ENCODE measurements at regions of chr18 and their contacts with region 1.

Region 1: GRCh38 chr18:7383002-7383980 is 152.4 kb downstream of the LRRC30 start:
- DNase-seq: no peak
- ATAC-seq: peak in 7 of 8 donors; percentile 29 to 77 (median 55)
- H3K4me3 ChIP-seq: no peak overlapping the region
- H3K27ac ChIP-seq: peak overlapping the region in 8 of 10 donors; percentile 35 to 76 (median 63)
- H3K4me1 ChIP-seq: peaks cover 0 to 28% (median 11%) of the 10 kb centered on the region in 9 donors
- H3K27me3 ChIP-seq: no peaks in the 10 kb centered on the region
- CTCF ChIP-seq: no peak

Region 2: DNA sequence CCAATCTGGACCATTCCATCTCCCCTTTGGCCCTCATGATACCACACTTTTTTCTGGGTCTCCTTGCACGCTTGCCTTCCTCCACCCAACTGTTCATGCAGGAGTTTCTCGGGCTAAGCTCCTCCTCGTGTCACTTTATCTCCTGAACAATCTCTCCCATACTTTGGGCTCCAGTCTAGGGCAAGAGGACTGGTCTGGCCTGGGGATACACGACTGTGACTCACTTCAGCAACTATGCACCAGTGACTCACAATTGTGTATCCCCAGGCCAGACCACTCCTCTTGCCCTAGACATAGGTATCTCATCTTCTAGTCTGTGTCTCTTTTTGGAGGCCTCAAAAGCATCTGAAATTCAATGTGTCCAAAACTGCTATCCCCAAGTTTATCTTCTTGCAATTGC is 34.5 kb after region 1 on chr18:
- intact Hi-C with region 1: loop called in 1 of 10 experiments (anchors 5 kb)
- DNase-seq: no peak
- ATAC-seq: no peak
- H3K4me3 ChIP-seq: no peak overlapping the region
- H3K27ac ChIP-seq: no peak overlapping the region
- H3K4me1 ChIP-seq: peaks cover 0 to 22% (median 9%) of the 10 kb centered on the region in 9 donors
- H3K27me3 ChIP-seq: no peaks in the 10 kb centered on the region
- CTCF ChIP-seq: no peak